ENCODE measurements at regions of chr9 and their contacts with region 1.

Region 1: GRCh38 chr9:95023217-95024003 is 294.1 kb downstream of the FANCC start:
- DNase-seq: peak; percentile 57
- H3K4me3 Mint-ChIP-seq: peak overlapping the region; percentile 41
- H3K27ac Mint-ChIP-seq: peak overlapping the region; percentile 95
- H3K4me1 Mint-ChIP-seq: peaks cover 68% of the 10 kb centered on the region
- H3K27me3 Mint-ChIP-seq: no peaks in the 10 kb centered on the region
- CTCF ChIP-seq: no peak

Region 2: DNA sequence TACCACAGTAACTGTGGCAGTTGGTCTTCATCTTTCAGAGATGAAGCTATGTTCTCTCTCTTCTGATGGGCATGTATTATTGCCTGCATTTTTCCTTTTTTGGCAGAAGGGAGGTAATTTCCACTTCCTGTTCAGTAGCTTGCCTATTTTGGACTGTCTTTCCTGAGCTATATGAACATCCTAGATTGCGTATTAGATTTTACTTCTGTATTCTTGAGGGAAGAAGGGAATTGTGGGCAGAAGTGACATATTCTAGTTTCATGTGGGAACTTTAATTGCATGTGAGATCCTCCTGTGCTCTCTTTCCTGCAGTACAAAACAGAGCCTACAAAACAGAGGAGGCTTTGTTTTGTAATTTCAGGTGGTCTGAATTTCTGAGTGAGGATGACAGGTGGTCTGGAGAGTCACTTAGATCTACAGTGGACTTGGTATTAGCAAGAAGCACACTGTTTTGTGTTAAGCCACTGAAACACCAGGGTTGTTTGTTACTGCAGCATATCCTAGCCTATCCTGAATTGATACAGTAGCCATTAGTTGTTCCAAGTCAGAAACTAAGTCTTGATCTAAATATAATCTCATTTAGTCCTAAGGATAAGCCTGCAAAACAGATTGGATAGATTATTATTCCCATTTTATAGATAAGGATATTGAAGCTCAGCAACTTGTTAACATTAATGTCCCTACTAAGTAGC is 228.8 kb before region 1 on chr9:
- CTCF ChIA-PET with region 1: no interaction called
- intact Hi-C with region 1: no loop called
- DNase-seq: no peak
- H3K4me3 Mint-ChIP-seq: no peak overlapping the region
- H3K27ac Mint-ChIP-seq: no peak overlapping the region
- H3K4me1 Mint-ChIP-seq: peaks cover 9% of the 10 kb centered on the region
- H3K27me3 Mint-ChIP-seq: no peaks in the 10 kb centered on the region
- CTCF ChIP-seq: no peak

Region 3: GRCh38 chr9:94805585-94805984 is 217.8 kb before region 1 on chr9:
- CTCF ChIA-PET with region 1: interaction called, 3 read pairs
- intact Hi-C with region 1: loop called (anchors 5 kb)
- DNase-seq: peak; percentile 75
- H3K4me3 Mint-ChIP-seq: peak overlapping the region; percentile 39
- H3K27ac Mint-ChIP-seq: peak overlapping the region; percentile 99
- H3K4me1 Mint-ChIP-seq: peaks cover 57% of the 10 kb centered on the region
- H3K27me3 Mint-ChIP-seq: no peaks in the 10 kb centered on the region
- CTCF ChIP-seq: no peak

Region 4: DNA sequence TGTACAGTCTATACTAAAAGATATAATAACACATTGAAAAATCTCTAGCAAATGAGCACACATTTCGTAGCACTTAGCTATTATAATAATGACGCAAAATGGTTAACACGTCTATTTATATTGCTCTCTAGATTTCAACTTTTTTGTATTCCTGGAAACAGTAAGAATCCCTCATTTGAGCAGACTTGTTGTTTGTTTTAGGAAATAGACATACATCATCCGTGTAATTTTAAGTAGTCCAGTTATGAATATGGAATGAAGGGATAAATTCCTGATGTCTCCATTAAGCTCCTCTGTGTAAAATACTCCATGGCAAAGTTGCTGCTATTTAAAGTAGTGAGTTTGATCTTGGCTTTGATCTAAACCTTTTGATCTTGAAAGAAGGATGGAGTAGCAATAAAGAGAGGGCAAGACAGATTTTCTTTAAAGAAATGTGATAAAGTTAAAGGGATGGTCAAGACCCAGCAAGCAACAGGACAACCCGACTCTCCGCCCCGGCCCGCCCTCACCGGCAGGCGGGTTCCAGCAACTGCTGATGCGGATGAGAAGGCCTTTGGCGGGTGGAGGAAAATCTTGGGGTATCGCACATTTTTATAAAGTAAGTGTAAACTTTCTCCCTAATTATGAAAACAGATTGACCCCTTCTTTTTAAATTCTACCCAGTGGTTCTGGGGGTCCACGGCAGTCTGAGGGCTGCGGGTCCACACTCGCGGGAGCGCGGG is 19.6 kb before region 1 on chr9:
- CTCF ChIA-PET with region 1: interaction called, 4 read pairs
- intact Hi-C with region 1: loop called (anchors 1 kb)
- DNase-seq: peak; percentile 58
- H3K4me3 Mint-ChIP-seq: peak overlapping the region; percentile 81
- H3K27ac Mint-ChIP-seq: peak overlapping the region; percentile 36
- H3K4me1 Mint-ChIP-seq: peaks cover 11% of the 10 kb centered on the region
- H3K27me3 Mint-ChIP-seq: no peaks in the 10 kb centered on the region
- CTCF ChIP-seq: no peak

Measured in Calu3 (cell line).